Naive thymus-derived CD4-positive, alpha-beta T cell (primary cell): ENCODE measurements at regions of chr6 and their contacts with region 1.

Region 1: DNA sequence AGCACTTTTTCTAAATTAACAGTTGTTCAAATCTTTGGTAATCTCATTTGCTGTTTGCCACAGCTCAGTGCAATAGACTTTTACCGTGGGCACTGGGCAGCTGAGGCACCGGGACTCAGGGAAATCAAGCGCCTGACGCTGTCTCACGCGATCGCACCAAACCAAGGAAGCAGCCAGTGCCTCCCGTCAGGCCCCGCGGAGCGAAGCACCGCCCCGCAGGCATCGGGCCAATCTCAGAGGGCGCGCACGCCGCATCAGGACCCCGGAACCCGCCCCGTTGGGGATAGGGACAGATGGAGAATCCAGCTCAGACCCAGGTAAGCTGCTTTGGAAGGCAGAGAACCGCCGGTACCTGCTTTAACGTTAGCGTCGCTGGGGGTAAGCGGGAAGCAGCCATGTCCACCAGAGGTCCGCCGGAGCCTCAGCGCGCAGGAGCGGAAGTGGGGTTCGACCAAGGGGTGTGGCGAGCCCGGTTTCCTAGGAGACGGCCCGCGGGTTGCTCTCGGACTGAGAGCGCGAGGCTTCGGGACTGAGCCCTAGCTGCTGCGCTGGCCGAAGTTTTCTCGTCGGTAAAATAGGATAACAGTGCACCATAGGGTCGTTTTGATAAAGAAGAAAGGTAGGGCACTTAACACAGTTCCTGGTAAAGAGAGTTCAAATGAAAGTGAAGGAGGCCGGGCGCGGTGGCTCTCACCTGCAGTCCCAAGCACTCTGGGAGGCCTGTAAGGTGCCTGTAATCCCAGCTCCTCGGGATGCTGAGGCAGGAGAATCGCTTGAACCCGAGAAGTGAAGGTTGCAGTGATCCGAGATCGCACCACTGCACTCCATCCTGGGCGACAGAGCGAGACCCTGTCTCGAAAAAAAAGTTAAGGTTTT is at the start of gene LYRM2:
- DNase-seq: peak; percentile 85 to 93 (median 91)
- ATAC-seq: peak; percentile 97
- H3K4me3 ChIP-seq: peak within 1 kb of the TSS; percentile 99
- H3K4me3 Mint-ChIP-seq: peak within 1 kb of the TSS; percentile 90 to 98 (median 94)
- H3K27ac ChIP-seq: peak within 1 kb of the TSS; percentile 91
- H3K27ac Mint-ChIP-seq: peak within 1 kb of the TSS; percentile 96 to 99 (median 99)
- H3K4me1 ChIP-seq: peaks cover 9 to 15% of the 10 kb centered on the region in 2 donors
- H3K4me1 Mint-ChIP-seq: peaks cover 6 to 45% (median 27%) of the 10 kb centered on the region in 7 donors
- H3K27me3 ChIP-seq: no peaks in the 10 kb centered on the region
- H3K27me3 Mint-ChIP-seq: peaks cover 0 to 3% (median 0%) of the 10 kb centered on the region in 5 donors
- total RNA-seq, gene LYRM2: 18.1 to 40.7 (median 32.0) TPM

Region 2: GRCh38 chr6:89145787-89146646 is 492.5 kb before region 1 on chr6 and contains the start of gene PM20D2:
- CTCF ChIA-PET with region 1: no interaction called
- POLR2A ChIA-PET with region 1: no interaction called
- intact Hi-C with region 1: loop called in 1 of 2 experiments (anchors 2 kb)
- DNase-seq: peak; percentile 45 to 78 (median 59)
- ATAC-seq: peak; percentile 84
- H3K4me3 ChIP-seq: peak within 1 kb of the TSS; percentile 58
- H3K4me3 Mint-ChIP-seq: peak within 1 kb of the TSS; percentile 86 to 99 (median 94)
- H3K27ac ChIP-seq: peak within 1 kb of the TSS; percentile 73
- H3K27ac Mint-ChIP-seq: peak within 1 kb of the TSS; percentile 84 to 98 (median 95)
- H3K4me1 ChIP-seq: peaks cover 5 to 10% of the 10 kb centered on the region in 2 donors
- H3K4me1 Mint-ChIP-seq: peaks cover 16 to 39% (median 23%) of the 10 kb centered on the region in 7 donors
- H3K27me3 ChIP-seq: no peaks in the 10 kb centered on the region
- H3K27me3 Mint-ChIP-seq: peaks cover 0 to 14% (median 0%) of the 10 kb centered on the region in 5 donors
- total RNA-seq, gene PM20D2: 4.6 to 12.7 (median 9.5) TPM

Region 3: GRCh38 chr6:89412071-89413005 is 226.2 kb before region 1 on chr6 and contains the start of gene RRAGD:
- CTCF ChIA-PET with region 1: no interaction called
- POLR2A ChIA-PET with region 1: interaction called, 4 read pairs
- intact Hi-C with region 1: loop called (anchors 1 kb)
- DNase-seq: peak; percentile 51 to 69 (median 61)
- ATAC-seq: peak; percentile 90
- H3K4me3 ChIP-seq: peak within 1 kb of the TSS; percentile 79
- H3K4me3 Mint-ChIP-seq: peak within 1 kb of the TSS; percentile 87 to 100 (median 97)
- H3K27ac ChIP-seq: peak within 1 kb of the TSS; percentile 57
- H3K27ac Mint-ChIP-seq: peak within 1 kb of the TSS; percentile 53 to 98 (median 88)
- H3K4me1 ChIP-seq: peaks cover 8% of the 10 kb centered on the region in 2 donors
- H3K4me1 Mint-ChIP-seq: peaks cover 2 to 24% (median 19%) of the 10 kb centered on the region in 7 donors
- H3K27me3 ChIP-seq: no peaks in the 10 kb centered on the region
- H3K27me3 Mint-ChIP-seq: peaks cover 6 to 64% (median 18%) of the 10 kb centered on the region in 5 donors
- total RNA-seq, gene RRAGD: 7.3 to 12.1 (median 9.6) TPM

Region 4: DNA sequence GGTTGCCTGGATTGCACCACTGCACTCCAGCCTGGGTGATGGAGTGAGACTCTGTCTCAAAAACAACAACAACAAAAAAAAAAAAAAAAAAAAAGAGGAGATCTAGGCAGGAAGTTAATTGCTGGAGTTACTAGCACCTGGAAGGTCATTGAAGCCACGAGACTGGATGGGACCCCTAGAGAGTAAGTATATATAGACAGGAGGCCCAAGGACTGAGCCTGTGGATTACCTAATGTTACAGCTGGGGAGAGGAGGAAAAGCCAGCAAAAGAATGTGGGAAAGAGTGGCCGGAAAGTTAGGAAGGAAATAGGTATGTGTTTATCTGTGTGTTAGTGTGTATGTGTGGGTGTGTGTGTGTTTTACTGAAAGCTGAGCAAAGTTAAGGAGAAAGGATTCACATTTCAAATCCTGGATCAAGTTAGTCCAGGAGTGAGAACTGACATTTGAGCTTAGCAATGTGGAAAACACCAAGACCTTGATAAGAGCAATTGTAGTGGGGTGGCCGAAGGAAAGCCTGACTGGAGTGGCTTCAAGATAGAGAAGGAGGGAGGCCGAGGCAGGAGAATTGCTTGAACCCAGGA is 167.2 kb before region 1 on chr6:
- CTCF ChIA-PET with region 1: no interaction called
- POLR2A ChIA-PET with region 1: no interaction called
- intact Hi-C with region 1: loop called in 1 of 2 experiments (anchors 5 kb)
- DNase-seq: no peak
- ATAC-seq: no peak
- H3K4me3 ChIP-seq: no peak overlapping the region
- H3K4me3 Mint-ChIP-seq: no peak overlapping the region
- H3K27ac ChIP-seq: no peak overlapping the region
- H3K27ac Mint-ChIP-seq: no peak overlapping the region
- H3K4me1 ChIP-seq: peaks cover 14% of the 10 kb centered on the region in 2 donors
- H3K4me1 Mint-ChIP-seq: peaks cover 0 to 24% (median 17%) of the 10 kb centered on the region in 7 donors
- H3K27me3 ChIP-seq: no peaks in the 10 kb centered on the region
- H3K27me3 Mint-ChIP-seq: peaks cover 0 to 25% (median 0%) of the 10 kb centered on the region in 5 donors

Region 5: GRCh38 chr6:89597988-89598692 is 40.4 kb before region 1 on chr6:
- CTCF ChIA-PET with region 1: no interaction called
- POLR2A ChIA-PET with region 1: no interaction called
- intact Hi-C with region 1: no loop called
- DNase-seq: no peak
- ATAC-seq: no peak
- H3K4me3 ChIP-seq: no peak overlapping the region
- H3K4me3 Mint-ChIP-seq: peak overlapping the region in 1 of 10 donors; percentile 62
- H3K27ac ChIP-seq: no peak overlapping the region
- H3K27ac Mint-ChIP-seq: peak overlapping the region in 1 of 9 donors; percentile 94
- H3K4me1 ChIP-seq: peaks cover 0 to 9% of the 10 kb centered on the region in 2 donors
- H3K4me1 Mint-ChIP-seq: peaks cover 12 to 47% (median 20%) of the 10 kb centered on the region in 7 donors
- H3K27me3 ChIP-seq: no peaks in the 10 kb centered on the region
- H3K27me3 Mint-ChIP-seq: no peaks in the 10 kb centered on the region

Region 6: GRCh38 chr6:89819336-89820130 is 181.0 kb after region 1 on chr6 and contains the start of gene MDN1:
- CTCF ChIA-PET with region 1: no interaction called
- POLR2A ChIA-PET with region 1: no interaction called
- intact Hi-C with region 1: loop called (anchors 1 to 2 kb)
- DNase-seq: peak; percentile 60 to 89 (median 87)
- ATAC-seq: peak; percentile 96
- H3K4me3 ChIP-seq: peak within 1 kb of the TSS; percentile 66
- H3K4me3 Mint-ChIP-seq: peak within 1 kb of the TSS; percentile 92 to 97 (median 96)
- H3K27ac ChIP-seq: peak within 1 kb of the TSS; percentile 75
- H3K27ac Mint-ChIP-seq: peak within 1 kb of the TSS; percentile 92 to 98 (median 96)
- H3K4me1 ChIP-seq: peaks cover 12 to 19% of the 10 kb centered on the region in 2 donors
- H3K4me1 Mint-ChIP-seq: peaks cover 16 to 49% (median 36%) of the 10 kb centered on the region in 7 donors
- H3K27me3 ChIP-seq: no peaks in the 10 kb centered on the region
- H3K27me3 Mint-ChIP-seq: no peaks in the 10 kb centered on the region
- total RNA-seq, gene MDN1: 54.9 to 66.1 (median 63.0) TPM